Right cardiac atrium (tissue), 5 donors: ENCODE measurements at regions of chr11 and their contacts with region 1.

Region 1: GRCh38 chr11:46504817-46505613 is 88.8 kb downstream of the AMBRA1 start:
- DNase-seq: no peak
- ATAC-seq: no peak
- H3K4me3 ChIP-seq: no peak overlapping the region
- H3K27ac ChIP-seq: peak overlapping the region; percentile 43
- H3K4me1 ChIP-seq: peaks cover 4% of the 10 kb centered on the region
- H3K27me3 ChIP-seq: no peaks in the 10 kb centered on the region

Region 2: DNA sequence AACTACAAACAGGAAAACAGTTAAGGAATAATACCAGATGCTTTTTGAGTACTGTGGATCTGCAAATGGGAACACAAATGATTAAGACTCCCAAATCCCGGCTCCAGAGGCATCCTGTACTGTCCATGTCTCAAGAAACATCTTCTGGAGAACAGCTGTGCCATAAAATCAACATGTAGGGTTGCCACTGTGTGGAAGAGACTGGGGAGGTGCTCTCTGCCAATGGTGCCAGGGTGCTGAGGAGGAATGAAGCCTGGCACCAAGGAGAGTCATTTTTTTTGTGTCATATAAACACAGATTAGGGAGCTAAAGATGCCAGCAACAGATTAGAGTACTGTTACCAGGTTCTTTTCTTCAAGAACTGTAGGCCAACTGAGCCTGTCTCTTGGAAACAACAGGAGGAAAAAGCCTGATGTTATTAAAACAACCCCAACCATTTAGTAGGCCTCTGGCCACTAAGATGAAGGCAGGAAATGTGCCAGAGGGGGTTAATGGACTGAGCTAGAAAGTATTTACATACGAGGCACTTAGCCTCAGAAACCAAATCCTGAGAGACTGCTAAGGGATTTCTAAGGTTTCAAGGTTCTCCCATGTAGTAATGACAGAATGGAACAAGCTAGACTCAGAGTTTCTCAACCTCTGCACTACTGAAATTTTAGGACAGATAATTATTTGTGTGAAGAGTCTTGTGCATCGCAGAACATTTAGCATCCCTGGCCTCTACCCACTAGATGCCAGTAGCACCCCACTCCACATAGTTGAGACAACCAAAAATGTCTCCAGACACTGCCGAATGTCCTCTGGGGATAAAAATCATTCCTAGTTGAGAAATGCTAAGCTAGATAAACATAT is 58.9 kb before region 1 on chr11:
- intact Hi-C with region 1: loop called in 1 of 4 experiments (anchors 10 kb)
- DNase-seq: no peak
- ATAC-seq: peak in 1 of 2 donors; percentile 56
- H3K4me3 ChIP-seq: no peak overlapping the region
- H3K27ac ChIP-seq: no peak overlapping the region
- H3K4me1 ChIP-seq: peaks cover 7% of the 10 kb centered on the region
- H3K27me3 ChIP-seq: no peaks in the 10 kb centered on the region